Ascending aorta (tissue), 2 donors: ENCODE measurements at regions of chr12 and their contacts with region 1.

Region 1: DNA sequence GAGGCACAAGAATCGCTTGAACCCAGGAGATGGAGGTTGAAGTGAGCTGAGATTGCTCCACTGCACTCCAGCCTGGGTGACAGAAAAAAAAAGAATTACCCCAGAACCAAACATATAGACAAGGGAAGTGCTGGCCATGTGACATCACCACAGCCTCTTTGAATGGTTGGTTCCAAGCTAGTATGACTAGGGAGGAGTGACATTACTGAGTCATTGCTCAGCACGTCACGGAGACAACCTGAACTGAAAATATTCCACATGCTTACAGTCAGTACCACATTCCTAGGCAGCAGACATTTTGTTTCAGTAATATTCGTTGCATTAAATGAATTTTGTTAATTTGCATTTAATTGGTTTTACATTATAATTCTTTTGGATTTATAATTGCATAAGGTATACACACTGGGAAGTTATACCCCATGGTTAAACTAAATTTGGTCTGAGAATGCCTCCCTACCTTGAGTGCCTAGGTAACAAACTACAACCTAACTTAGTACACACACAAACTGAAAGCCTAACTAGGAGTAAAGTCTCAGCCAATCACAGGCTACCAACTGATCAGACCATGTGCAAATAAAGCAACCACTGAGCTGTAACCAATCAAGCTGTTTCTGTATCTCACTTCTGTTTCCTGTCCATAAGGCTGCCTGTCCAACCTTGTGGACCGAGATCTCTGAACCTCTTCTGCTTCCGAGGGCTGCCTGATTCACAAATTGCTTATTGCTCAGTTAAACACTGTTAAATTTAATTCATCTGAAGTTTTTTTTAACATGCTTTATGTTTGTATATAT is 164.4 kb downstream of the CAND1 start:
- DNase-seq: no peak
- H3K4me3 ChIP-seq: no peak overlapping the region
- H3K27ac ChIP-seq: peak overlapping the region; percentile 68 to 74
- H3K4me1 ChIP-seq: peaks cover 7 to 18% of the 10 kb centered on the region in 2 donors
- H3K27me3 ChIP-seq: no peaks in the 10 kb centered on the region
- CTCF ChIP-seq: no peak

Region 2: GRCh38 chr12:67268896-67269631 is 164.5 kb before region 1 on chr12 and contains the start of gene CAND1:
- intact Hi-C with region 1: loop called (anchors 5 kb)
- DNase-seq: peak; percentile 90 to 99
- H3K4me3 ChIP-seq: peak within 1 kb of the TSS; percentile 78 to 96
- H3K27ac ChIP-seq: peak within 1 kb of the TSS; percentile 93 to 99
- H3K4me1 ChIP-seq: peaks cover 0 to 30% of the 10 kb centered on the region in 2 donors
- H3K27me3 ChIP-seq: no peaks in the 10 kb centered on the region
- CTCF ChIP-seq: no peak
- total RNA-seq, gene CAND1: 31.6 TPM

Region 3: GRCh38 chr12:67457778-67458177 is 24.2 kb after region 1 on chr12:
- intact Hi-C with region 1: no loop called
- DNase-seq: no peak
- H3K4me3 ChIP-seq: no peak overlapping the region
- H3K27ac ChIP-seq: peak overlapping the region; percentile 14 to 60
- H3K4me1 ChIP-seq: peaks cover 0 to 10% of the 10 kb centered on the region in 2 donors
- H3K27me3 ChIP-seq: no peaks in the 10 kb centered on the region
- CTCF ChIP-seq: peak in 2 of 3 experiments; percentile 29 to 32

Region 4: GRCh38 chr12:67541625-67541991 is 108.0 kb after region 1 on chr12:
- intact Hi-C with region 1: no loop called
- DNase-seq: no peak
- H3K4me3 ChIP-seq: no peak overlapping the region
- H3K27ac ChIP-seq: no peak overlapping the region
- H3K4me1 ChIP-seq: no peaks in the 10 kb centered on the region
- H3K27me3 ChIP-seq: no peaks in the 10 kb centered on the region
- CTCF ChIP-seq: no peak

Region 5: DNA sequence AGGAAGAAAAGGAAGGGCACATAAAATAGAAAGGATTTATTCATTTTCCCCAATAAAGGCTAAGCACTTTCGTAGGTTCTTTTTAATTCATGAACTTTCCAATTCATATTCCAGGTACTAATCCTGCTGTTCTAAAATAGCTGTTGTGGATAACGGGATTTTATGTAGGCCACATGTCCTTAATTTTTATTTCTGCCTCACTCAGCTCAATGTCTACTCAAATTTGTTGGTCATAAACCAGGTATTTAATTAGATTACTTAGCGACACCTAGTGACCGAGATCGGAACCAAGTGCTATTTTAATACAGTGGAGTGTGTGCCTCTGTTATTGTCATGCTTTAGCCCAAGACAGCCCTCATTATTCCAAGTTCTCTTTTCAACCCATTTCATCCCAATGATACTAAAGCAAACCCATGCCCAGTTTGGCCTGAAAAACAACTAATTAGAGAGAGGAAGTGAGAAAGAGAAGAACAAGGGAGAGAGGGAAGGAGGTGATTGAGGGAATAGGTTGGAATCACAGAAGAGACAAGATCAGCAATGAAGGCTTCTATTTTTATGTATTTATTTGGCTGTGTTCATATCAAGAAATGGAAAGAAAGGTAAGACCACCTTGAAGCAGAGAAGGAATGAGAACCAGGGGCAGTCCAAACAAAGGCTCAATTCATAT is 509.8 kb after region 1 on chr12:
- intact Hi-C with region 1: loop called (anchors 2 kb)
- DNase-seq: peak in 1 of 2 donors; percentile 87
- H3K4me3 ChIP-seq: no peak overlapping the region
- H3K27ac ChIP-seq: no peak overlapping the region
- H3K4me1 ChIP-seq: no peaks in the 10 kb centered on the region
- H3K27me3 ChIP-seq: no peaks in the 10 kb centered on the region
- CTCF ChIP-seq: peak; percentile 53 to 76 (median 54)